Common myeloid progenitor, CD34-positive (primary cell): ENCODE measurements at regions of chr12 and their contacts with region 1.

Region 1: GRCh38 chr12:52243856-52244614 is 11.0 kb downstream of the KRT7 start:
- DNase-seq: peak; percentile 86 to 97 (median 97)
- H3K4me3 ChIP-seq: peak overlapping the region in 1 of 7 experiments; percentile 30
- H3K27ac ChIP-seq: peak overlapping the region; percentile 17 to 55
- H3K4me1 ChIP-seq: peaks cover 0 to 25% (median 15%) of the 10 kb centered on the region in 4 experiments
- H3K27me3 ChIP-seq: peaks cover 0 to 14% (median 7%) of the 10 kb centered on the region in 5 experiments

Region 2: GRCh38 chr12:52221912-52222457 is 22.1 kb before region 1 on chr12:
- CTCF ChIA-PET with region 1: interaction called, 20 read pairs
- POLR2A ChIA-PET with region 1: no interaction called
- DNase-seq: peak; percentile 46 to 80 (median 75)
- H3K4me3 ChIP-seq: no peak overlapping the region
- H3K27ac ChIP-seq: no peak overlapping the region
- H3K4me1 ChIP-seq: no peaks in the 10 kb centered on the region
- H3K27me3 ChIP-seq: peaks cover 2 to 14% (median 7%) of the 10 kb centered on the region in 5 experiments

Region 3: GRCh38 chr12:52258335-52258901 is 14.4 kb after region 1 on chr12:
- CTCF ChIA-PET with region 1: interaction called, 21 read pairs
- POLR2A ChIA-PET with region 1: no interaction called
- DNase-seq: peak in 2 of 3 donors; percentile 24 to 42
- H3K4me3 ChIP-seq: peak overlapping the region in 2 of 7 experiments; percentile 6 to 38
- H3K27ac ChIP-seq: no peak overlapping the region
- H3K4me1 ChIP-seq: peaks cover 13 to 44% (median 36%) of the 10 kb centered on the region in 4 experiments
- H3K27me3 ChIP-seq: peaks cover 3 to 69% (median 47%) of the 10 kb centered on the region in 5 experiments

Region 4: GRCh38 chr12:52268212-52268611 is 24.2 kb after region 1 on chr12:
- CTCF ChIA-PET with region 1: interaction called, 10 read pairs
- POLR2A ChIA-PET with region 1: no interaction called
- DNase-seq: no peak
- H3K4me3 ChIP-seq: no peak overlapping the region
- H3K27ac ChIP-seq: no peak overlapping the region
- H3K4me1 ChIP-seq: no peaks in the 10 kb centered on the region
- H3K27me3 ChIP-seq: peaks cover 2 to 14% (median 8%) of the 10 kb centered on the region in 5 experiments

Region 5: GRCh38 chr12:52327052-52327829 is 83.2 kb after region 1 on chr12:
- CTCF ChIA-PET with region 1: interaction called, 14 read pairs
- POLR2A ChIA-PET with region 1: no interaction called
- DNase-seq: peak; percentile 91 to 95 (median 94)
- H3K4me3 ChIP-seq: no peak overlapping the region
- H3K27ac ChIP-seq: no peak overlapping the region
- H3K4me1 ChIP-seq: no peaks in the 10 kb centered on the region
- H3K27me3 ChIP-seq: peaks cover 0 to 9% (median 3%) of the 10 kb centered on the region in 5 experiments